HepG2 (cell line): ENCODE measurements at regions of chr3 and their contacts with region 1.

Region 1: GRCh38 chr3:127628788-127629466 is at the start of gene PODXL2:
- DNase-seq: peak; percentile 28
- ATAC-seq: peak; percentile 84
- H3K4me3 ChIP-seq: peak within 1 kb of the TSS; percentile 30 to 67 (median 62); a peak in 4 of 6 replicates
- H3K27ac ChIP-seq: no peak within 1 kb of the TSS
- H3K4me1 ChIP-seq: peaks cover 21% of the 10 kb centered on the region
- H3K27me3 ChIP-seq: peaks cover 2 to 7% of the 10 kb centered on the region in 2 experiments
- CTCF ChIP-seq: no peak
- EP300 ChIP-seq: no peak
- POLR2A ChIP-seq: peak in 1 of 2 experiments; percentile 32; a peak in 1 of 4 replicates
- RAD21 ChIP-seq: no peak
- total RNA-seq, gene PODXL2: 13.5 and 25.1 TPM in 2 replicates

Region 2: DNA sequence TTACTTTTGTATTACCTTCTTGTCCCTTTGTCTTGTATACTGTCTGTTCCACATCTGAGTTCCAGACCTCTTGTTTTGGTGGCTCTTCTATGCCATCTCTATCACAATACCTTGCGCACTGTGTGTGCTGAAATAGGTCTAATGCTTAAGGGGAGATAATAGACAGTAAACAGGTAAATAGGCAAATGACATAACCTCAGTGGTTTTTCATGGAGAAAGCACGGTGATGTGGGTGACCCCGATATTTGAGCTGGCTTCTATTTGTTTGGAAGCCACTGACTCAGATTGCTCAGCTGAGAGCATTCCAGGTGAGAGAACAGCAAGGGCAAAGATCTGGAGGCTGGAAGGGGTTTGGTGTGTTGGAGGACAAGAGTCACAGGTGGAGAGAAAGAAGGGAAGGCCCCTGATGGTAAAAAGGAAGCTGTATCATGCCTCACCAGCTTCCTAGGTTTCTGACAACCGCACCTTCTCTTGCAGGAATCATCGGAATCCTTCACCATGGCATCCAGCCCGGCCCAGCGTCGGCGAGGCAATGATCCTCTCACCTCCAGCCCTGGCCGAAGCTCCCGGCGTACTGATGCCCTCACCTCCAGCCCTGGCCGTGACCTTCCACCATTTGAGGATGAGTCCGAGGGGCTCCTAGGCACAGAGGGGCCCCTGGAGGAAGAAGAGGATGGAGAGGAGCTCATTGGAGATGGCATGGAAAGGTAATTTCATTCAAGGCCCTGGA is 29.9 kb before region 1 on chr3:
- CTCF ChIA-PET with region 1: no interaction called
- POLR2A ChIA-PET with region 1: interaction called, 4 read pairs
- in situ Hi-C with region 1: no loop called
- intact Hi-C with region 1: loop called (anchors 1 kb)
- DNase-seq: peak; percentile 35
- ATAC-seq: no peak
- H3K4me3 ChIP-seq: peak overlapping the region; percentile 66 to 79 (median 73)
- H3K27ac ChIP-seq: peak overlapping the region; percentile 89
- H3K4me1 ChIP-seq: peaks cover 56% of the 10 kb centered on the region
- H3K27me3 ChIP-seq: no peaks in the 10 kb centered on the region
- CTCF ChIP-seq: no peak
- EP300 ChIP-seq: no peak
- POLR2A ChIP-seq: no peak
- RAD21 ChIP-seq: no peak